Calu3 (cell line): ENCODE measurements at regions of chr3 and their contacts with region 1.

Region 1: DNA sequence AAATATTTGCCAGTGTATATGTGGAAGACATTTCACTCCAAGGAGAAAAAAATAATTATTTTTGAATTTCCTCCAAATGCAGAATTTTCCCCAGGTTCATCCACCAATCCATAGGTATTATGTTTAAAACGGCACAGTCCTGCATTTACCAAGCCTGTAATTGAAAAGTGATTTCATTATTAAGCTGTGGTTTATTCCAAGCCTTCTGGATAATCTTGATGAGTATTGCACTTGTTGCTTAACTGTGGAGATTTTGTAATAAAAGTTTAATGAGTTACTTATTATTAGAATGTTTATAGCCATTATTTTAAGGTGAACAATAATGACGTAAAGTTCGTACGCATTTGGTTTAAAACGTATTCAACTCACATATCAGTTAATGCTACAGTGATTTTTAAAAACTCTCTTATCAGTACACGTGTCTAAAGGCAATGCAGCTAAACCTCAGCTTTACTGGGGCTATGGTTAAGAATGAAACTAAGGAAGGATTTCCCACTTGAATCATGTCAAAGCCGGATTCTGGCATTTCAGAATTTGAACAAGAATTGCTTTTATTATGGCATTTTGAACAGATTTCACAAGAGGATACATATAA is 283.9 kb downstream of the MECOM start:
- DNase-seq: no peak
- H3K4me3 Mint-ChIP-seq: peak overlapping the region; percentile 34
- H3K27ac Mint-ChIP-seq: peak overlapping the region; percentile 63
- H3K4me1 Mint-ChIP-seq: peaks cover 57% of the 10 kb centered on the region
- H3K27me3 Mint-ChIP-seq: no peaks in the 10 kb centered on the region
- CTCF ChIP-seq: no peak

Region 2: GRCh38 chr3:169138849-169139420 is 240.7 kb before region 1 on chr3:
- CTCF ChIA-PET with region 1: no interaction called
- intact Hi-C with region 1: loop called (anchors 2 kb)
- DNase-seq: no peak
- H3K4me3 Mint-ChIP-seq: peak overlapping the region; percentile 62
- H3K27ac Mint-ChIP-seq: peak overlapping the region; percentile 83
- H3K4me1 Mint-ChIP-seq: peaks cover 60% of the 10 kb centered on the region
- H3K27me3 Mint-ChIP-seq: no peaks in the 10 kb centered on the region
- CTCF ChIP-seq: no peak

Region 3: GRCh38 chr3:169362301-169362700 is 17.3 kb before region 1 on chr3:
- CTCF ChIA-PET with region 1: interaction called, 8 read pairs
- intact Hi-C with region 1: loop called (anchors 2 kb)
- DNase-seq: peak; percentile 87
- H3K4me3 Mint-ChIP-seq: peak overlapping the region; percentile 46
- H3K27ac Mint-ChIP-seq: peak overlapping the region; percentile 83
- H3K4me1 Mint-ChIP-seq: peaks cover 60% of the 10 kb centered on the region
- H3K27me3 Mint-ChIP-seq: no peaks in the 10 kb centered on the region
- CTCF ChIP-seq: no peak

Region 4: DNA sequence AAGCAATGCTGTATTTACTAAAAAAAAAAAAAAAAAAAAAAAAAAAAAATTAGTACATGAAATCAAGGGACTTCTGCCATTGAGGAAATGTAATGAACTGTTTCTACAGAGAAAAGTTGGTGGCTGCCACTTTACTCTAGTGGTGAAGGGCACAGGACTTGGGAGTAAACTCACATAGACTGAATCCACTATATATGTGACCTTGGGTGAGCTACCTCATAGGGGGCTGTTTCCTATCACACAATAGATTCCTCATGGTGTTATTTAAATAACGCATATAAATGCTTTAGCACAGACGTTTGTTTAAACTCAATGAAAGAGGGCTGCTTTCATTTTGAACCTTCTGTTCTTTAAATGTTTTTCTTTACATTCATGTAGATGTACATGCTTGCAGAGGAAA is 359.5 kb after region 1 on chr3:
- CTCF ChIA-PET with region 1: no interaction called
- intact Hi-C with region 1: no loop called
- DNase-seq: no peak
- H3K4me3 Mint-ChIP-seq: no peak overlapping the region
- H3K27ac Mint-ChIP-seq: no peak overlapping the region
- H3K4me1 Mint-ChIP-seq: no peaks in the 10 kb centered on the region
- H3K27me3 Mint-ChIP-seq: peaks cover 10% of the 10 kb centered on the region
- CTCF ChIP-seq: no peak